Posterior cingulate gyrus (tissue), 11 donors: ENCODE measurements at regions of chr1 and their contacts with region 1.

Region 1: DNA sequence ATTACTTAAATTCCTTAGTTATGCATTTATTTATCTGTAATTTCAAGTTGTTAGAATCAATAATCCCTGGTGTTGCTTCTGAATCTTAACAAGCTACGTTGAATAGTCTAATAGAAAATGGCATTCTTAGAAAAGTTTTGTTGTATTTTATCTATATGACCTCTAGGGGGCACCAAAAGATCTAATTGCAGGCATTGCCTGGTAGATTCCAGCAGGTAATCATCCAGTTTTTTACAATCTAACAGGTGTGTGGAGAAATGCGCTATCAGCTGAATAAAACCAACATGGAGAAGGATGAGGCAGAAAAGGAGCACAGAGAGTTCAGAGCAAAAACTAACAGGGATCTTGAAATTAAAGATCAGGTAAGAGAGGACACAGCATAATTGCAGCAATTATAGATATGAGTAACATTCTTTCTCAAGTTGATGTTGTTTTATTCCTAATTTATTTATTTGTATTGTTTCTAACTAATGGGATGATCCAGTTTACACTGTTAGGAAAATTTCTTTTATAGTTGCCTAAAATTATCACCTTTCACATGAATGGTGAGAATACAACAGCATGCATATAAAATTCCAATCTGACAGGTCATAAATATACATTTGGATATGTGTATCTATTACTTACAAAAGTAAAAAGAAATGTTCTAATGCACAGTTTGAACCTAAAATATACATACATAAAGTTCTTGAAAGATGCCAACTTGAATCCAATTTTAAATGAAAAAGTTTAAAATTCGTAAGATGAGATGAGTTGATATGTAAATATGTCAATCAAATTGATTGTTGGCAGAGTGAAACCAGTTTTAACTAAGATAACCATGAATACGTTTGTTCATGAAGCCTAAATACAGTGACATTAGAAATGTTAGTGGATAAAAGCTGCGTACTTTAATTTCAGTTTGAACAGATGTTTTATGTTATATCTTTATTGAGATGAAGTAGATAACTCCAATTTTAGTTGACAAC is 88.4 kb downstream of the SDCCAG8 start:
- DNase-seq: no peak

Region 2: DNA sequence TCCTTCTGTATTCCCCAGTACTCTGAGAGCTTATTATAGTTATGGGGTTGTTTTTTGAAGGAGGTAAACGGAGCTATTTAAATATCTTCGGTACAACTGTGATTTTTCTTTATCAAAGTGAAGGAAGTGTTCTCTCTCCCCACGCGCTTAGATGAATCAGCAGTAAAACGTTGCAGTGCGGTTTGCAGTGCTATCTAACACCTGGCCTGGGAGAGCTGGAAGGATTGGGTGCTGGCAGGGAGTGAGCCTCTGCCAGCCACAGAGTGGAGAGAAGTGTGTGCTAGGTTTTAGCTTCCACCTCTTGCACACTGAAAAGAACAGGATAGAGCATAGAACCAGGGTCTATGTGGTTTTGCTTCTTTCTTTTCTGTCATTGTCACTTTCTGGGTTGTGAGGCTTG is 77.5 kb after region 1 on chr1:
- intact Hi-C with region 1: loop called (anchors 10 kb)
- DNase-seq: peak; percentile 28 to 93 (median 56)

Region 3: DNA sequence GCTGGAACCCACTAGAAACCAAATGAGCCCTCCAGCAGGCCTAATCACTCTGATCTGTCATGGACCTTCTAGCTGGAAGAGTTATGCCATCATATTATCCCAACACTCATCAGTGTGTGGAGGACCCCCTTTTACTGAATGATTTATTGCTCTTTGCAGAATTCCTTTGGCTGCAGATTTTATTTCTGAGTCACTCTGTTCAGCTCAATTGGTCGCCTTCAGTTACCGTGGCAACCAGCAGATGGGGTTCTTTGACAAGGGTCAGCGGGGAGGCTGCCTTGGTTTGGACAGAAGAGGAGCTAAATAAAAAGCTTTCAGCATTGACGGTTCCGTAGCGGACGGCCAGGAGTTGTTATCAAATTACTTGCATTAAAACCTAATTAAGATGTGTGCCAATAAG is 131.7 kb after region 1 on chr1:
- intact Hi-C with region 1: loop called (anchors 2 kb)
- DNase-seq: peak in 8 of 10 donors; percentile 68 to 96 (median 78)

Region 4: GRCh38 chr1:243748706-243749283 is 404.5 kb after region 1 on chr1:
- intact Hi-C with region 1: loop called (anchors 5 kb)
- DNase-seq: no peak